GM12878 (cell line): ENCODE measurements at regions of chr22 and their contacts with region 1.

Region 1: DNA sequence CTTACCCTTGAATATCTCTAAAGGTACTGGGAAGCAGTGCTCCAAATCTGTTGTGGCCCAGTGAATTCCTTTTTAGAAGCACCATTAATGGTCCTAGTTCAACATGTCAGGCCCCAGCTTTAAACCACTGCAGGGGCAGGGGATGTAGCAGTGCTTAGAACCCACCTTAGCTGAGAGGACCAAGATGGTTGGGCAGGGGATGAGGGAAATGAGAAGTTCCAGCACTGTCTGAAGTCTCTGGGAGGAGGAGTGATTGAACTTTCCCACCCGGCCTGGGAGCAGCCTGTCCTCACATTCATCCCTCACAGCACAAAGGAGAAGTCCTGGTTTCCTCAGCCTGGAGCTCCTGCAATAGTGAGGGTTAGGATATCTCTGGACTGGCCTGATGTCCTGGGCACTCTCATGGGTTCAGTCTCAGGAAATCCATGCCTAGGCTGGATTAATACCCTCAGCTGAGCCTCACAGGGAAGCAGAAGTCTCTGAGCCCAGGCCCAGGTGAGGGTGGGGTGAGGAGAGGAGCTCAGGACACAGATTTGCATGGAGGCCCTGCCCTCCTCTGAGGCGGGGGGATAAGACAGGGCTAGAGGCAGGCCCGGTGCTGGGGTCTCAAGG is 28.6 kb upstream of the PRAME start:
- DNase-seq: no peak
- ATAC-seq: no peak
- H3K4me3 ChIP-seq: no peak overlapping the region
- H3K27ac ChIP-seq: no peak overlapping the region
- H3K4me1 ChIP-seq: no peaks in the 10 kb centered on the region
- H3K27me3 ChIP-seq: no peaks in the 10 kb centered on the region
- CTCF ChIP-seq: no peak
- EP300 ChIP-seq: no peak
- POLR2A ChIP-seq: no peak
- RAD21 ChIP-seq: no peak

Region 2: GRCh38 chr22:22569218-22569617 is 18.5 kb before region 1 on chr22:
- CTCF ChIA-PET with region 1: interaction called, 12 read pairs
- POLR2A ChIA-PET with region 1: no interaction called
- RAD21 ChIA-PET with region 1: no interaction called
- SMC1A ChIA-PET with region 1: no interaction called
- in situ Hi-C with region 1: no loop called
- intact Hi-C with region 1: no loop called
- DNase-seq: no peak
- ATAC-seq: no peak
- H3K4me3 ChIP-seq: no peak overlapping the region
- H3K27ac ChIP-seq: no peak overlapping the region
- H3K4me1 ChIP-seq: no peaks in the 10 kb centered on the region
- H3K27me3 ChIP-seq: no peaks in the 10 kb centered on the region
- CTCF ChIP-seq: no peak
- EP300 ChIP-seq: no peak
- POLR2A ChIP-seq: no peak
- RAD21 ChIP-seq: no peak

Region 3: DNA sequence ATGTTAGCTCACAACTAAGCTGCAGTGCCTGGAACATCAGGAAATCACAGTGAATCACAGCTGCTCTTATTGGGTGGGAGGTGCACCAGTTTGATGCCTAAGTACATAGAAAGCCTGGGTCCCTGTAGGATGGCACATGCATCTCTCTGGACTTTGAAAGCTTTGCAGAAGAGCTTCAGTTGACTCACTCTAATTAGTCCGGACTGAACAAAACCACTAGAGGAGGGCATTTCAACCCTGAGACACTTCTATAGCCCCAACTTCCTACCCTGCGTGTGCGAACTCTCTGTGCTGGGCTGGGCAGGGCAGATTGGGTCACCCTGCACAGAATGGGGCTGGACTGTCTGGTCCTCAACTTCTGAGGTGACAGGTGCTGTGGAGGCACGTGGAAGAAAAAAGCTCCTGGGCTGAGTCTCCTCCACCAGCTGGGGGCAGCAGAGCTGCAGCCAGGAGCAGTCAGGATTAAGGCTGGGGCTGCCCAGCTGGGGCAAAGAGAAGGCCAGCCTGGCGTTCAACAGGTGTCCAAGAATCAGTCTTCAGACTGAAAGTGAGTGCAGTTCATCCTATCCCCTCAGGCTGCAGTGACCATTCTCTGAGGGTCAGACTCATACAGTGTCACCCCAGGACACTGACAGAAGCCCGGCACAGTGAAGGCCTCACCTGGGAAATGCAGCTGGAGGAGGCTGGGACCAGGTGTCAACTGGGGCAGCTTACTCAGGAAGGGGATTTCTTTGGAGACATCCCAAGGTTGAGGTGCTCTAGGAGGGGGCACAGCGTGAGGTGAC is 78.8 kb after region 1 on chr22:
- CTCF ChIA-PET with region 1: interaction called, 14 read pairs
- POLR2A ChIA-PET with region 1: no interaction called
- RAD21 ChIA-PET with region 1: interaction called, 5 read pairs
- SMC1A ChIA-PET with region 1: interaction called, 7 read pairs
- in situ Hi-C with region 1: no loop called
- intact Hi-C with region 1: no loop called
- DNase-seq: no peak
- ATAC-seq: peak; percentile 81
- H3K4me3 ChIP-seq: no peak overlapping the region
- H3K27ac ChIP-seq: no peak overlapping the region
- H3K4me1 ChIP-seq: peaks cover 5% of the 10 kb centered on the region; the same call in 1 of the 2 replicates
- H3K27me3 ChIP-seq: no peaks in the 10 kb centered on the region
- CTCF ChIP-seq: peak; percentile 44 to 67 (median 63)
- EP300 ChIP-seq: no peak
- POLR2A ChIP-seq: no peak
- RAD21 ChIP-seq: peak; percentile 72

Region 4: GRCh38 chr22:22687638-22688500 is 100.2 kb after region 1 on chr22:
- CTCF ChIA-PET with region 1: interaction called, 31 read pairs
- POLR2A ChIA-PET with region 1: no interaction called
- RAD21 ChIA-PET with region 1: interaction called, 7 read pairs
- SMC1A ChIA-PET with region 1: interaction called, 5 read pairs
- in situ Hi-C with region 1: loop called (anchors 5 kb)
- intact Hi-C with region 1: no loop called
- DNase-seq: no peak
- ATAC-seq: peak; percentile 82
- H3K4me3 ChIP-seq: no peak overlapping the region
- H3K27ac ChIP-seq: no peak overlapping the region
- H3K4me1 ChIP-seq: peaks cover 32% of the 10 kb centered on the region
- H3K27me3 ChIP-seq: no peaks in the 10 kb centered on the region
- CTCF ChIP-seq: peak; percentile 64 to 69 (median 65); a peak in 5 of 6 replicates
- EP300 ChIP-seq: no peak
- POLR2A ChIP-seq: no peak
- RAD21 ChIP-seq: peak; percentile 38

Region 5: GRCh38 chr22:22702237-22703202 is 114.8 kb after region 1 on chr22:
- CTCF ChIA-PET with region 1: interaction called, 19 read pairs
- POLR2A ChIA-PET with region 1: no interaction called
- RAD21 ChIA-PET with region 1: no interaction called
- SMC1A ChIA-PET with region 1: no interaction called
- in situ Hi-C with region 1: no loop called
- intact Hi-C with region 1: no loop called
- DNase-seq: no peak
- ATAC-seq: peak; percentile 68; the same call in 2 of the 3 replicates
- H3K4me3 ChIP-seq: no peak overlapping the region
- H3K27ac ChIP-seq: no peak overlapping the region
- H3K4me1 ChIP-seq: no peaks in the 10 kb centered on the region
- H3K27me3 ChIP-seq: no peaks in the 10 kb centered on the region
- CTCF ChIP-seq: peak; percentile 18 to 48 (median 27)
- EP300 ChIP-seq: no peak
- POLR2A ChIP-seq: no peak
- RAD21 ChIP-seq: no peak